Endothelial cell of umbilical vein (primary cell): ENCODE measurements at regions of chr6 and their contacts with region 1.

Region 1: DNA sequence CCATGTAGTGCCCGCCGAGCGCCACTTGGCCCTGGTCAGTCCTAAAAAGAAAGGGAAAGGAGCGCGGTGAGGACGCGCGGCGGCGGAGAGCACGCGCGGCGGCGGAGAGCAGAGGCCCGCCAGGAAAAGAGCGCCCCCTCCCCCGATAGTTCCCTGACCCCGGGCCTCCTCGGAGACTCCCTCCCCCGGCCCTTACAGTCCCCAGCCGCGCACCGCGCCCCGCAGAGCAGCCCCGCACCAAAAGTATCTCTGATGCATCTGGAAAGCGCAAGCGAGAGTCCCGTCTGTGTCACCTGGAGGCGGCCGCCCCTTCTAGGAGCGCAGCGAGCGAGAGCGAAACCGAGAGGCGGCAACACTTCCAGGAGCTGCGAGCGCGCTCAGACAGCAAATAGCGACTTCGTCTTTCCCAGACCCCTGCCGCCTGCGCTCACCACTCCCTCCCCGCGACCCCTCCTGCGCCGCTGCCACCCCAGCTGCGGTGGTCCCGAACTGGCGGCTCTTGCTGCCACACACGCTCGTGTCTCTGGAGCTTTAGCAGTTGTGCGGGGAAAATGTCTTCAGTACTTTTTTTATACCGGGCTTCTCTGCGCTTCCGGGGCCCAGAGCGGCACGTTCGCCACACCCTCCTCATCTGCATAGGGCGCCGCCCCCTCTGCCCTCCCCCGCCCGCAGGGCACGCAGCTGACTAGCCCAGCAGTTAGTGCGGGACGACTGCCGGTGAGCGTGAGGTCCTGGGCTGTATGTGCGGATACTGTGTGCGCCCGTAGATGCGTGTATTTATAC is at the start of gene TENT5A:
- DNase-seq: peak; percentile 68
- H3K4me3 ChIP-seq: peak within 1 kb of the TSS; percentile 52 to 78 (median 69)
- H3K27ac ChIP-seq: peak within 1 kb of the TSS; percentile 42
- H3K4me1 ChIP-seq: peaks cover 8% of the 10 kb centered on the region
- H3K27me3 ChIP-seq: peaks cover 0 to 11% of the 10 kb centered on the region in 2 experiments
- CTCF ChIP-seq: no peak
- POLR2A ChIP-seq: peak; percentile 59
- total RNA-seq, gene TENT5A: 1.2 and 2.4 TPM in 2 replicates

Region 2: DNA sequence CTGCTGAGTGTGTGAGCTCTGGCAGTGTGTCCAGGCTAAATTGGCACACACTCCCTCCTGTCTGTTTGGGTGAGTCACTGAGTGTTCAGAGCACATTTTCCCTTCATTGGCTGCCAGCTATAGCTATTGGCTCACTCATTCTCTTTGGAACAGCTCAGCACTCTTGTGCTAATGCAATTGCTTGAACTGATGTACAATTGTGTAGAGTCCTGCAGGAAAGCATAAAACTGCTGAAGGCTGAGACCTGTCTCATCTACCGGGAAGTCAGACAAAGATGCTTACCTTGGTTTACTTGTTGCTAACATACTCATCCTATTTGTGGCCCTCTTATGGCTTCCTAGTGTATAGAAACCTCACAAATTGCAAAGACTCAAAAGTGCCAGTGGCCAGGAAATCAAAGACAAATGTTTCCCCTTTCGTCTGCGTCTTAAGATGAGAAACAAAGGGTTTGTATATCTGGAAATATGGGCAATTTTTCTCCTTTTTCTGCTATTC is 1294.8 kb before region 1 on chr6:
- CTCF ChIA-PET with region 1: no interaction called
- POLR2A ChIA-PET with region 1: no interaction called
- dilution Hi-C with region 1: no loop called
- intact Hi-C with region 1: loop called (anchors 5 kb)
- DNase-seq: peak; percentile 94
- H3K4me3 ChIP-seq: no peak overlapping the region
- H3K27ac ChIP-seq: no peak overlapping the region
- H3K4me1 ChIP-seq: peaks cover 58% of the 10 kb centered on the region
- H3K27me3 ChIP-seq: no peaks in the 10 kb centered on the region
- CTCF ChIP-seq: peak in 1 of 2 donors; percentile 31
- POLR2A ChIP-seq: no peak

Region 3: DNA sequence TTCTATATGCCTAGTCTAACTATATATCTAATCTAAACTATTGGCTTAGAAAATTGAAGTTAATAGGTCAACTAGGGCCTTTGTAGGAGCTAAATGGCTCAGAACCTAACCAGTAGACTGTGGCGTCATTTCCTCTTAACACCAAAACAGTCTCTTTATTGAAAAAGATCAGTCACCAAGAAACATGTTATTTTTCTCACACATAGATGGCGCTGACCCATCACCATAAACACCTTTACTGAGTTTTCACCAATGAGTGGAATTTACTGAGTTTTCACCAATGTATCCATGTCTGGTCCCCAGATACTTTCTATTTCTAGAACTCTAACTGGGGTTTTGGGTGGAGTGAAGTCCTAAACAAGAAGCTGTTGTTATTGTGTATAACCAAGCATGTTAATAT is 1009.8 kb before region 1 on chr6:
- CTCF ChIA-PET with region 1: no interaction called
- POLR2A ChIA-PET with region 1: no interaction called
- dilution Hi-C with region 1: no loop called
- intact Hi-C with region 1: loop called (anchors 2 kb)
- DNase-seq: peak; percentile 33
- H3K4me3 ChIP-seq: no peak overlapping the region
- H3K27ac ChIP-seq: no peak overlapping the region
- H3K4me1 ChIP-seq: no peaks in the 10 kb centered on the region
- H3K27me3 ChIP-seq: no peaks in the 10 kb centered on the region
- CTCF ChIP-seq: peak; percentile 31
- POLR2A ChIP-seq: no peak

Region 4: GRCh38 chr6:81734085-81734484 is 18.2 kb before region 1 on chr6:
- CTCF ChIA-PET with region 1: interaction called, 11 read pairs
- POLR2A ChIA-PET with region 1: no interaction called
- dilution Hi-C with region 1: no loop called
- intact Hi-C with region 1: no loop called
- DNase-seq: peak; percentile 29
- H3K4me3 ChIP-seq: no peak overlapping the region
- H3K27ac ChIP-seq: no peak overlapping the region
- H3K4me1 ChIP-seq: no peaks in the 10 kb centered on the region
- H3K27me3 ChIP-seq: no peaks in the 10 kb centered on the region
- CTCF ChIP-seq: no peak
- POLR2A ChIP-seq: no peak

Region 5: DNA sequence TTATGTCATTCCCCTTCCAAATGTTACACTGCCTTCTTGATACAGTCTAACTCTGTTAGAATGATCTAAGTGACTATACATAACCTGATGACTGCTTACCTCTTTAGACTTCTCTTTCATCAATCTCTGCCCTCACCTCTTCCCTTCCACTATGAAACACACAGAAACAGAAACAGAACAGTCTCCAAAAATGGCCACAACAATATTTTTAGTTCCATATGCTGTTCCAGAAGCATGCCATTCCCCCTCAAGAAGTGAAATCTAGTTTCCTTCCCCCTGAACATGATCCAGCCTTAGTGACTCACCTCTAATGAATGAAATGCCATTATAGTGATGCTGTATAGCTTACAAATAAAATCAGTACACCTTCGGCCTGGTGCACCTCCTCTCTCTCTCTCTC is 229.5 kb after region 1 on chr6:
- CTCF ChIA-PET with region 1: no interaction called
- POLR2A ChIA-PET with region 1: no interaction called
- dilution Hi-C with region 1: no loop called
- intact Hi-C with region 1: loop called (anchors 2 kb)
- DNase-seq: peak; percentile 68
- H3K4me3 ChIP-seq: no peak overlapping the region
- H3K27ac ChIP-seq: peak overlapping the region; percentile 66
- H3K4me1 ChIP-seq: peaks cover 15% of the 10 kb centered on the region
- H3K27me3 ChIP-seq: no peaks in the 10 kb centered on the region
- CTCF ChIP-seq: no peak
- POLR2A ChIP-seq: no peak

Region 6: GRCh38 chr6:82178077-82178758 is 425.9 kb after region 1 on chr6:
- CTCF ChIA-PET with region 1: no interaction called
- POLR2A ChIA-PET with region 1: no interaction called
- dilution Hi-C with region 1: no loop called
- intact Hi-C with region 1: loop called (anchors 5 kb)
- DNase-seq: peak; percentile 56
- H3K4me3 ChIP-seq: no peak overlapping the region
- H3K27ac ChIP-seq: no peak overlapping the region
- H3K4me1 ChIP-seq: no peaks in the 10 kb centered on the region
- H3K27me3 ChIP-seq: no peaks in the 10 kb centered on the region
- CTCF ChIP-seq: peak; percentile 19 to 26
- POLR2A ChIP-seq: no peak

Region 7: DNA sequence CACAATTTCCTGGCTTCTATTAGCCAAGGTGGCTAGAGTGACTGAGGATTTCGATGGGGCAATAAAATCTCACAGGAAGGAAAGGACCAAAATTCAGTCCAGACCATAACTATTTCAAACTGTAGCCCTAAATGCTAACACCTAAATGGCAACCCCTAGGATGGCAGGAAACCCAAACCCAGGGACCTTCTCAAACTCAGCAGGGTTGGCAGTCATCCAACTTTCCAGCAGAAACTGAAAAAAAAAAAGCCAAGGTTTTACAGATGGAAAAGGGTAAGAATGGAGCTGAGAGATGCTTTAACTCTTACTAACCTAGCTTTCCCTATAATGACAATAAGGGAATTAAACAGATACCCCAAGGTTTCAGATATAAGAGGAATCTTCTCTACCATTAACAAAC is 484.7 kb after region 1 on chr6:
- CTCF ChIA-PET with region 1: no interaction called
- POLR2A ChIA-PET with region 1: no interaction called
- dilution Hi-C with region 1: no loop called
- intact Hi-C with region 1: no loop called
- DNase-seq: peak; percentile 12
- H3K4me3 ChIP-seq: no peak overlapping the region
- H3K27ac ChIP-seq: no peak overlapping the region
- H3K4me1 ChIP-seq: no peaks in the 10 kb centered on the region
- H3K27me3 ChIP-seq: no peaks in the 10 kb centered on the region
- CTCF ChIP-seq: no peak
- POLR2A ChIP-seq: no peak